ENCODE measurements at regions of chr17 and their contacts with region 1.

Region 1: GRCh38 chr17:39461113-39461925 is at the start of gene CDK12:
- DNase-seq: peak; percentile 97
- ATAC-seq: peak; percentile 89
- H3K4me3 Mint-ChIP-seq: peak within 1 kb of the TSS; percentile 92
- H3K27ac Mint-ChIP-seq: peak within 1 kb of the TSS; percentile 97
- H3K4me1 Mint-ChIP-seq: peaks cover 25% of the 10 kb centered on the region
- H3K27me3 Mint-ChIP-seq: no peaks in the 10 kb centered on the region
- total RNA-seq, gene CDK12: 84.4 to 97.3 TPM

Region 2: GRCh38 chr17:39429600-39429999 is 31.7 kb before region 1 on chr17:
- CTCF ChIA-PET with region 1: no interaction called
- DNase-seq: no peak
- ATAC-seq: no peak
- H3K4me3 Mint-ChIP-seq: no peak overlapping the region
- H3K27ac Mint-ChIP-seq: no peak overlapping the region
- H3K4me1 Mint-ChIP-seq: no peaks in the 10 kb centered on the region
- H3K27me3 Mint-ChIP-seq: no peaks in the 10 kb centered on the region

Region 3: GRCh38 chr17:39450847-39451581 is 10.3 kb before region 1 on chr17 and contains the start of gene MED1:
- CTCF ChIA-PET with region 1: interaction called, 31 read pairs
- DNase-seq: peak; percentile 98
- ATAC-seq: peak; percentile 99
- H3K4me3 Mint-ChIP-seq: peak within 1 kb of the TSS; percentile 96
- H3K27ac Mint-ChIP-seq: peak within 1 kb of the TSS; percentile 93
- H3K4me1 Mint-ChIP-seq: peaks cover 28% of the 10 kb centered on the region
- H3K27me3 Mint-ChIP-seq: no peaks in the 10 kb centered on the region
- total RNA-seq, gene MED1: 53.2 to 73.0 TPM